ENCODE measurements at regions of chr17 and their contacts with region 1.

Region 1: GRCh38 chr17:68398691-68399637 is 58.3 kb downstream of the WIPI1 start:
- DNase-seq: peak; percentile 50
- H3K4me3 ChIP-seq: no peak overlapping the region
- H3K27ac ChIP-seq: no peak overlapping the region
- H3K27me3 ChIP-seq: no peaks in the 10 kb centered on the region
- CTCF ChIP-seq: peak; percentile 90

Region 2: GRCh38 chr17:68247445-68248198 is 151.3 kb before region 1 on chr17 and contains the start of gene AMZ2:
- CTCF ChIA-PET with region 1: interaction called, 9 read pairs
- POLR2A ChIA-PET with region 1: interaction called, 10 read pairs
- DNase-seq: peak; percentile 81
- H3K4me3 ChIP-seq: peak within 1 kb of the TSS; percentile 79
- H3K27ac ChIP-seq: peak within 1 kb of the TSS; percentile 89
- H3K27me3 ChIP-seq: no peaks in the 10 kb centered on the region
- CTCF ChIP-seq: no peak
- polyA plus RNA-seq, gene AMZ2: 89.8 and 112 TPM in 2 replicates

Region 3: DNA sequence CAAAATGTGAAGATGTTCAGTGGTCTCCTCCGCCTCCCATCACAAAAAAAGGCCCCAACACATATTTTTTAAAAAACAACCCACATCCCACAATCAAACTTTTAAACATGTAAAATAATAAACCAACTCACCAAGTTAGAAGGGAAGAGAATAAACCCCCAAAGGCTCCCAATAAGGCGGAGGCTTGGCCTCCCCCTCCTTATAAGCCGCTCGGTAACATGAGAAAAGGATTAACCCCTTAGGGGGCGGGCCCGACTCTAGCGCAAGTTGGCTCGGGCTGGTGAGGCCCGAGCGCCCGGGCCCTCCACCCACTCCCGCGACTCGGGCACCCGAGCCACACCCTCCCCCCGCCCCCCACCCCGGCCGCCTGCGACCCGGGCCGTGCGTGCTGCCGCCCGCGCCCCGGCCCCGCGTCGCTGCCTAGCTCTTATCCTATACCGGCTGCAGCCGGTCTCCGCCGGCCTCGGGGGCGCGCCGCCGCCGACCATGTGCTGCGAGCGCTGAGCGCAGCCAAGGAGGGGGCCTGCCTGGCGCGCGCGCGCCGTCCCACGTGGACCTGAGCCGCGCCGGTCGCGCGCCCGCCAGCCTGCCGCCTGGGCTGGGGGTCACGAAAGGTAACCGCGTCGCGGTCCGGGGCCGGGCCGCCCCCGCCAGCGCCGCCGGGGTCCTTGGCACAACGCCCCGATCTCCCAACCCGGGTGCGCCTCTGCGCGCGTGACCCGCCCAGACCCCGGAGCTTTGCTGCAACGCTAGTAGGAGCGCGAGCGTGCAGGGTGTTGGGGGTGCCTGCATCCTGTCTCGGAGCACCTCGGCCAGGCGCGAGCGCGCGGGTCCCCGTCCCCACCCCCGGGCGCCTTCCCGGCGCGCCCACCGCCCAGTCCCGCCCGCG is 107.8 kb before region 1 on chr17 and contains the starts of genes ARSG and SLC16A6:
- CTCF ChIA-PET with region 1: interaction called, 13 read pairs
- POLR2A ChIA-PET with region 1: interaction called, 4 read pairs
- DNase-seq: no peak
- H3K4me3 ChIP-seq: peak within 1 kb of the TSS; percentile 73
- H3K27ac ChIP-seq: no peak within 1 kb of the TSS
- H3K27me3 ChIP-seq: peaks cover 21% of the 10 kb centered on the region
- CTCF ChIP-seq: no peak
- polyA plus RNA-seq, gene ARSG: 1.8 and 1.9 TPM in 2 replicates
- polyA plus RNA-seq, gene SLC16A6: 1.2 TPM in 2 replicates

Region 4: DNA sequence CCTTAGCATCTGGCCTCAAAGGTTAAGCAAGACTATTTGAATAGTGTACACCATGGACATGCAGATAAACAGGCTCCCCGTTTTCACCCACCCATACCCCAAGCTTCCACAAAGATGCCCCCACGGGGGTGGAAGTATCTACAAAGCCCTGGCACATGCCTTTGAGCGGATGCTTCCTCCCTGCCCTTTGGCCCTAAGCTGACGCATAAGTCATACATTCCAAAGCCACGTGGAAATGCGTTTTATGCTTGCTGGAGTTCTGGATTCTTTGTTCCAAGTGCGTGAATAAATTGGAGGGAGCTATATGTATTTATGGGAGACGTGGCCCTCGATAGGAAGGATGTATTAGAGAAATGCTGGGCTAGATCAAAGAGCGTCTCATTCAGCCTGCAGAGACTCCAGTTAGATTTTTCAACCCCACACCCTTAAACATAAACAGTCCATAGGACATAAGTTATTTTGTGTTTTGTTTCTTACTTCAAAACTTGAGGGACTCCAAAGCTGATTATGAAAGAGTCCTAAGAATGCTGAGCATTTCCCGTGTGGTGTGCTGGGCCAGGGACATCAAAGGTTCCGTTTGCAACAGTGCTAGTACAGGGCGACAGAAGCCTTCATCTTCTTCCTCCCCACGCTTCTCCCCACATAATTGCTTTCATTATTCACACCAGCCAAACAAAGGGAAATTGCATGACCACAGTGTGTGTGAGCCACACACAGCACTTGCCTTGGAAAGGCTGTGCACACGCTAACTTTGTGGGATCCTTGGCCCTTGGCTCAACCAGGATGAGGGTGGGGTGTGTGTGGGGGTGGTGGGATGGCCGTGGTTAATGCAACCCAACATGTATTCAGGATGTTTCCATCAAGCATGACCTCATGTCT is 15.3 kb before region 1 on chr17:
- CTCF ChIA-PET with region 1: interaction called, 44 read pairs
- POLR2A ChIA-PET with region 1: interaction called, 6 read pairs
- DNase-seq: peak; percentile 69
- H3K4me3 ChIP-seq: peak overlapping the region; percentile 37
- H3K27ac ChIP-seq: peak overlapping the region; percentile 95
- H3K27me3 ChIP-seq: no peaks in the 10 kb centered on the region
- CTCF ChIP-seq: no peak

Region 5: GRCh38 chr17:68424942-68425386 is 26.0 kb after region 1 on chr17:
- CTCF ChIA-PET with region 1: interaction called, 12 read pairs
- POLR2A ChIA-PET with region 1: no interaction called
- DNase-seq: no peak
- H3K4me3 ChIP-seq: no peak overlapping the region
- H3K27ac ChIP-seq: no peak overlapping the region
- H3K27me3 ChIP-seq: no peaks in the 10 kb centered on the region
- CTCF ChIP-seq: no peak

Region 6: DNA sequence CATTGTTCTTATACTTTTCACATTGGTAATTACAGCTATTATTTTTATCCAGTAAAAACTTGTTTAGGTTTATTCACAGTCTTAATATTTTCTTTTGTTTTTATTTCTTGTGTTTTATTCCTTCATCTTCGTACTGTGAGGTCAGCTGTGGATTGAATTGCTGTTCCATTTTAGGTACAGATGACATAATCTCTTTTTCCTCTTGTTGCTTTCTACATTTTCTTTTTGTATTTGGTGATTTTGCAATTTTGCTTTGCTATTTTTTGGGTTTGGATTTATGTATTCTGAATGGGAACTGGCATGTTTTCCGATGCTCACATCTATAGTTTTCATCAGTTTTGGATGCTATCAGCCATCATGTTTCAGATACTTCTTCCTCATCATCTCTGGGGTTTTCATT is 80.2 kb after region 1 on chr17:
- CTCF ChIA-PET with region 1: no interaction called
- POLR2A ChIA-PET with region 1: no interaction called
- DNase-seq: no peak
- H3K4me3 ChIP-seq: no peak overlapping the region
- H3K27ac ChIP-seq: no peak overlapping the region
- H3K27me3 ChIP-seq: peaks cover 2% of the 10 kb centered on the region
- CTCF ChIP-seq: no peak

Region 7: DNA sequence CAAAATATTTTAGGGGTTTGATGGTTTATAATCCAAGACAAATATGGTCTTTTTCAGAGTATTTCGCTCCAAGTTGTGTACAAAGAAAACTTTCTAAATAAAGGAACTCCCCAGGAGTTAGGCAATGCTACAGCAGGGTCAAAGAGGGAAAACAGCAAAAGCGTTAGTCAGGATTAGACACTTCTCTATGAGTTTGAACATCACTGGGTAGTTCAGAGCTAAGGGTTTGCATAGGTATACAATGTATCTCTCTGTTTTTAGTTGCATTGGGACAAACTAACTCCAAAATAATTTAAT is 167.4 kb after region 1 on chr17:
- CTCF ChIA-PET with region 1: no interaction called
- POLR2A ChIA-PET with region 1: no interaction called
- DNase-seq: no peak
- H3K4me3 ChIP-seq: no peak overlapping the region
- H3K27ac ChIP-seq: no peak overlapping the region
- H3K27me3 ChIP-seq: no peaks in the 10 kb centered on the region
- CTCF ChIP-seq: no peak

Region 8: GRCh38 chr17:69235338-69235930 is 836.5 kb after region 1 on chr17:
- CTCF ChIA-PET with region 1: no interaction called
- POLR2A ChIA-PET with region 1: no interaction called
- DNase-seq: peak; percentile 51
- H3K4me3 ChIP-seq: no peak overlapping the region
- H3K27ac ChIP-seq: no peak overlapping the region
- H3K27me3 ChIP-seq: no peaks in the 10 kb centered on the region
- CTCF ChIP-seq: peak; percentile 82

Measured in AG04450 (cell line).